Heart left ventricle (tissue), 16 donors: ENCODE measurements at regions of chr15 and their contacts with region 1.

Region 1: GRCh38 chr15:24633082-24633481 is 42.5 kb upstream of the NPAP1 start:
- DNase-seq: no peak
- ATAC-seq: no peak
- H3K4me3 ChIP-seq: no peak overlapping the region
- H3K27ac ChIP-seq: no peak overlapping the region
- H3K4me1 ChIP-seq: no peaks in the 10 kb centered on the region
- H3K27me3 ChIP-seq: no peaks in the 10 kb centered on the region
- CTCF ChIP-seq: no peak
- POLR2A ChIP-seq: no peak

Region 2: GRCh38 chr15:24661512-24661911 is 28.4 kb after region 1 on chr15:
- intact Hi-C with region 1: loop called in 1 of 10 experiments (anchors 5 kb)
- DNase-seq: no peak
- ATAC-seq: no peak
- H3K4me3 ChIP-seq: no peak overlapping the region
- H3K27ac ChIP-seq: no peak overlapping the region
- H3K4me1 ChIP-seq: no peaks in the 10 kb centered on the region
- H3K27me3 ChIP-seq: no peaks in the 10 kb centered on the region
- CTCF ChIP-seq: no peak
- POLR2A ChIP-seq: no peak